Activated B cell treated with CpG ODN at 0.5 μM for 24 hours (primary cell): ENCODE measurements at regions of chr1 and their contacts with region 1.

Region 1: GRCh38 chr1:93345633-93346420 is at the start of gene DR1:
- DNase-seq: peak; percentile 92
- ATAC-seq: peak; percentile 77
- H3K4me3 Mint-ChIP-seq: peak within 1 kb of the TSS; percentile 100
- H3K27ac Mint-ChIP-seq: peak within 1 kb of the TSS; percentile 99
- H3K4me1 Mint-ChIP-seq: peaks cover 49% of the 10 kb centered on the region
- H3K27me3 Mint-ChIP-seq: no peaks in the 10 kb centered on the region
- CTCF ChIP-seq: no peak
- total RNA-seq, gene DR1: 62.3 and 62.9 TPM in 2 replicates

Region 2: DNA sequence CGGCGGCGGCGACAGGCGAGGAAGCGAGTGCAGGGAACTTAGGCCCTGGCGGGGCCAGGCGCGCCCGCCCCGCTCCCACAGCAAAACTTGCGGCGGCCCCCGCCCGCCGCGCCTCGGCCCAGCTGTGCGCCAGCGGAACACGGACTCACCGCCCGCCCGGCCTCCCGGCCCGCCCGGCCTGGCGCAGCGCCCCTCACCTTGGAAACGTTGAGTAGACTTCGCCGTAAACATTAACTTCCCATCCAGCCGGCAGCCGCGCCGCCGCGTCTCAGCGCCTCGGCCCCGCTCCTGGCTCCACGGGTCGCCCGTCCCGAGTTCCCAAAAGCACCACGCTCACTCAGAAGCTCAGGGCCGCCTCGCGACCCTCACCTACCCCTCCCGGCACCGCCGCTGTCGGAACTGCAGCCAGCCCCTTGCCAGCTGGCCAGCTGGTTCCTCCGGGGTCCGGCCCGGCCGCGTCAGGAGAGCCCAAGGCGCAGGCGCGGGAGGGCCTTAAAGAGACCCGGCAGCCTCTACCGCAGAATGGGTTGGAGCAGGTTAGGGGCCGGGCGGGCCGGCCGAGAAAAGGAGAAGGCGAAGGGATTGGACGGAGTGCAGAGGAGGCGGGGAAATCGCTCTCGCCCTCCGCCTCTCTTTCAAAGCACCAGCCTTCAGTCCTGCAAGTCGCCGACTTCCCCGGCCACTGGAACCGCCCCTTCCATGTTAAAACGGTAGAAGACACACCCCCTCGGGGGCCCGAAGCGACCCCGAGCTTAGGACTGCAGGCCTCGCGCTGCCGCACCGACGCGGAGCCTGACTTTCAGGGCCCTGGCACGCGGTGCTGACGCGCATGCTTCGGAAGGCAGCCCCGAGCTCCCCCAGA is 561.0 kb before region 1 on chr1 and contains the start of gene EVI5:
- CTCF ChIA-PET with region 1: no interaction called
- POLR2A ChIA-PET with region 1: interaction called, 3 read pairs
- intact Hi-C with region 1: loop called (anchors 5 kb)
- DNase-seq: peak; percentile 86
- ATAC-seq: peak; percentile 92
- H3K4me3 Mint-ChIP-seq: peak within 1 kb of the TSS; percentile 92
- H3K27ac Mint-ChIP-seq: peak within 1 kb of the TSS; percentile 91
- H3K4me1 Mint-ChIP-seq: peaks cover 31% of the 10 kb centered on the region
- H3K27me3 Mint-ChIP-seq: no peaks in the 10 kb centered on the region
- CTCF ChIP-seq: no peak
- total RNA-seq, gene EVI5: 18.2 and 27.4 TPM in 2 replicates

Region 3: GRCh38 chr1:92960395-92961130 is 385.3 kb before region 1 on chr1:
- CTCF ChIA-PET with region 1: no interaction called
- POLR2A ChIA-PET with region 1: interaction called, 21 read pairs
- intact Hi-C with region 1: loop called (anchors 5 kb)
- DNase-seq: no peak
- ATAC-seq: peak; percentile 49
- H3K4me3 Mint-ChIP-seq: peak overlapping the region; percentile 96
- H3K27ac Mint-ChIP-seq: peak overlapping the region; percentile 98
- H3K4me1 Mint-ChIP-seq: peaks cover 46% of the 10 kb centered on the region
- H3K27me3 Mint-ChIP-seq: no peaks in the 10 kb centered on the region
- CTCF ChIP-seq: no peak

Region 4: GRCh38 chr1:93123201-93123783 is 222.5 kb before region 1 on chr1:
- CTCF ChIA-PET with region 1: no interaction called
- POLR2A ChIA-PET with region 1: no interaction called
- intact Hi-C with region 1: no loop called
- DNase-seq: no peak
- ATAC-seq: no peak
- H3K4me3 Mint-ChIP-seq: no peak overlapping the region
- H3K27ac Mint-ChIP-seq: no peak overlapping the region
- H3K4me1 Mint-ChIP-seq: no peaks in the 10 kb centered on the region
- H3K27me3 Mint-ChIP-seq: no peaks in the 10 kb centered on the region
- CTCF ChIP-seq: no peak

Region 5: DNA sequence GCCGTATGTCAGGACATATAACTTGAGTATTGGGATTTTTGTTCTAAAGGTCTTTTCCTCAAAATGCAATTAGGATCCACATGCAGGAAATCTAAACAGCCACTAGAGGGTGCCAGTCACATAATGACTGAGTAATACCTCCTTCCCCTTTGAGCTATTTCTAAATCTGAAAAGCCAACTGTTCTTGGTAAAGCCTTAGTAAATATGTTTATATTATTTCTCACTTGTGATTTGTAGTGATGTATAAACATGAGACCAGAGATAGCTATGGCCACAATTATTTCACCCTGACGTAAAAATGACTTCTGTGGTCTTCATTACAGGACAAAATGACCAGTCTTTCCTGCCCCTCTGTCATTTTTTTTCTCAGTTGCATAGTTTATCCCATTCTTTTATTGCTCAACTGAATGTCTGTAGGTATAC is 41.1 kb before region 1 on chr1:
- CTCF ChIA-PET with region 1: interaction called, 6 read pairs
- POLR2A ChIA-PET with region 1: interaction called, 14 read pairs
- intact Hi-C with region 1: loop called (anchors 1 kb)
- DNase-seq: no peak
- ATAC-seq: peak; percentile 71
- H3K4me3 Mint-ChIP-seq: no peak overlapping the region
- H3K27ac Mint-ChIP-seq: no peak overlapping the region
- H3K4me1 Mint-ChIP-seq: no peaks in the 10 kb centered on the region
- H3K27me3 Mint-ChIP-seq: no peaks in the 10 kb centered on the region
- CTCF ChIP-seq: peak; percentile 87

Region 6: DNA sequence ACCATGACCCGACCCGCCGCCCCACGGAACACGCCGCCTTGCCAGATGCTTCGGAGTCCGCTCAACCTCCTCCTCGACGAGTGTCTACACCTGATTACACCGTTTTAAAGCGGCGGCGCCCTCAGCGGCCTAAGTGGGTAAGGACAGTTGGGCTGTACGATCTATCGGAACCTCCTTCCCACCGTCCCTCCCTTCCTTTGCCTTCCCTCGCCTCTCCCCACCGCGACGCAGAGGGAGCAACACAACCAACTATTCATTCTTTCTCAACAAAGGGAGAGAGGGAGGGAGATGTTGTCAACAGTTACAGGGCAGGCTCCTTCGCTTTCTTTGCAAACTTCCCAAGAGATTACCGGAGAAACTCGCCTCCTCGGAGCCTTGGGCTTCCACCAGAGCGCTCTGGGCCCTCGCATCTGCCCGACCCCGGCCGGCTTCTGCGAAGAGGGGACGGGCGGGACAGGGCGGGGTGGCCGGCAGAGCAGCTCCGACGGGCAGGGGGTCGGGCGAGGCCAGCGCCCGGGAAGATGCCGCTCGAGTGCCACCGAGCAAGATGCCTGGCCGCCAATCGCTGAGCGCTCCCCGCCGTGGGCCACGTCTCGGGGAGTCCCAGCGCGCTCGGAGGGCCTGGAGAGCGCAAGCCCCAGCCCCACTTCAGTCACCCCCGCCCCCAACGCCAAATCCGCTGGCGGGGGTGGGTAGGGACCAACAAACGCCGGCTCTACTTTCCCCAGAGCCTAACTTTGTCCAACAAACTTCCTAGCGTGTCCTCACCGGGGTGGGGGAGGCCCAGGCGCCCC is 335.1 kb after region 1 on chr1:
- CTCF ChIA-PET with region 1: no interaction called
- POLR2A ChIA-PET with region 1: no interaction called
- intact Hi-C with region 1: loop called (anchors 10 kb)
- DNase-seq: peak; percentile 62
- ATAC-seq: peak; percentile 72
- H3K4me3 Mint-ChIP-seq: peak overlapping the region; percentile 99
- H3K27ac Mint-ChIP-seq: peak overlapping the region; percentile 94
- H3K4me1 Mint-ChIP-seq: peaks cover 76% of the 10 kb centered on the region
- H3K27me3 Mint-ChIP-seq: no peaks in the 10 kb centered on the region
- CTCF ChIP-seq: no peak

Region 7: GRCh38 chr1:93909146-93910050 is 563.6 kb after region 1 on chr1 and contains the start of gene GCLM:
- CTCF ChIA-PET with region 1: no interaction called
- POLR2A ChIA-PET with region 1: no interaction called
- intact Hi-C with region 1: loop called (anchors 5 kb)
- DNase-seq: peak; percentile 95
- ATAC-seq: peak; percentile 92
- H3K4me3 Mint-ChIP-seq: peak within 1 kb of the TSS; percentile 89
- H3K27ac Mint-ChIP-seq: peak within 1 kb of the TSS; percentile 87
- H3K4me1 Mint-ChIP-seq: peaks cover 25% of the 10 kb centered on the region
- H3K27me3 Mint-ChIP-seq: no peaks in the 10 kb centered on the region
- CTCF ChIP-seq: peak; percentile 48
- total RNA-seq, gene GCLM: 8.6 and 9.6 TPM in 2 replicates